Activated CD4-positive, alpha-beta memory T cell treated with anti-CD3 and anti-CD28 coated beads for 36 hours (primary cell): ENCODE measurements at regions of chr20 and their contacts with region 1.

Region 1: DNA sequence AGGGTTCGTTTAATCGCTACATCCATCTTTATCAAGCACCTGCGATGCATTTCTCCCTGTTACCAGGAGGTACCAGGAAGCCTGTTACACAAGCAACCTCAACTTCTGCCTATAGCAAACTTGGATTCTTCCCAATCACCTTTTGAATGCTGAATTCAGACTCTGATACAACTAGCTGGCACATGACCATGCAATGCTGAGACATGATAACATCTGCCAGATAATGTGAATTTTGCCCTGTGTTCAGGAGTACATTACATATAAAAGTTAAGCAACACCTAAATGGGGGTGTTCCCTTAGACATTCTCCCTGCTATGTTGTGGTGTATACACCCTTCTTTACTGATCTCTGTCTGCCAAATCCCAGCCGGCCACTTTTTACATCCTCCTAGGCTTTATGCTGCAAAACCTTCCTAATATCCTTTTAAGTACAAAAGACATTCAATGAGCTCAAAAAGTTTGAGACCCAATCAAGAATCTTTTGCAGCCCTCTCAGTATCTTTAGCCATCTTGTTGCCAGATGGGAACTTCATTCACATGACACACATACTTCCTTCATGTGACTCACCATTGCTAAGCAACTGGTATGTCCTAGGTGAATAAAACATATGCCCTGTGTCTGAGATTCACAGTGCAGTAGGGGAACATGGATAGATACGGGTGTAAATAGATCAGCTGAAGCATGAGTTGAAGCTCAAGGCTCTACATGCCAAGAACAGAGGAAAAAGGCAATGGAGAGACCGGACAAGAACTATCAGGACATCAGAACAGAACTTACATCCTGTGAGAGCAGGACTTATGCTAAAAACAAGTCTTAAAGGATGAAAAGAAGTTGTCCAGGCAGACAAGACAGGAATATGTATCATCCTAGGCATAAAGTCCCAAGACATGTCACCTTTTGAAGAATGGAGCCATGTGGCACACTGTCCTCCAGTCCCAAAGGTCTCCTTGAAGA is 84.3 kb downstream of the ZHX3 start:
- DNase-seq: no peak
- H3K4me3 Mint-ChIP-seq: no peak overlapping the region
- H3K27ac Mint-ChIP-seq: no peak overlapping the region
- H3K4me1 Mint-ChIP-seq: peaks cover 20% of the 10 kb centered on the region
- H3K27me3 Mint-ChIP-seq: no peaks in the 10 kb centered on the region

Region 2: GRCh38 chr20:40902661-40903060 is 330.6 kb before region 1 on chr20:
- CTCF ChIA-PET with region 1: no interaction called
- POLR2A ChIA-PET with region 1: no interaction called
- intact Hi-C with region 1: no loop called
- DNase-seq: no peak
- H3K4me3 Mint-ChIP-seq: no peak overlapping the region
- H3K27ac Mint-ChIP-seq: no peak overlapping the region
- H3K4me1 Mint-ChIP-seq: no peaks in the 10 kb centered on the region
- H3K27me3 Mint-ChIP-seq: peaks cover 3% of the 10 kb centered on the region

Region 3: DNA sequence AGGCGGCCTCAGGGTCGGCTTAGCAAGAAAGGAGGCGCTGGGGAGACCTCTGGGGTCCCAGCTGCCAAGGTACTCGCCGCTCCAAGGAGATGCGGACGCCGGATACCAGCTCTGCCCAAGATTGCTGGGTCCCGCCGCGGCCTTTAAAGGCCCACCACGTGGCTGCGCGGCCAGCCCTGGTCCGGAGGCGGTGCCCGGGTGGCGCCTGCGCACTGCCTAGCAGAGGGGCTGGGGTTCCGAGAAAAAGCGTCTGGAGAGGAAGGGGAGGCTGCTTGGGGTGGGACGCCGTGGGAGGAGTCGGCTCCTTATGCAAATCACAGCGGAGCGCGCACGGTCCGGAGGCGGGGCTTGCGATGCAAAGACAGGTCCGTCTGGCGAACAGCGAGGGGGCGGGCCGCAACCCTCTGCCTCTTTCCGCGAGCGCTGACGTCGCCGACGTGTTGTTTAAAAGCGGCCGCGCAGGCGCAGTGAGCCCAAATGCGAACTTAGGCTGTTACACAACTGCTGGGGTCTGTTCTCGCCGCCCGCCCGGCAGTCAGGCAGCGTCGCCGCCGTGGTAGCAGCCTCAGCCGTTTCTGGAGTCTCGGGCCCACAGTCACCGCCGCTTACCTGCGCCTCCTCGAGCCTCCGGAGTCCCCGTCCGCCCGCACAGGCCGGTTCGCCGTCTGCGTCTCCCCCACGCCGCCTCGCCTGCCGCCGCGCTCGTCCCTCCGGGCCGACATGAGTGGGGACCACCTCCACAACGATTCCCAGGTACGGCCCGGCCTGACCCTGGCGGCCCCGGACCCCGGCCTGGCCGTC is 204.7 kb before region 1 on chr20 and contains the start of gene TOP1:
- CTCF ChIA-PET with region 1: no interaction called
- POLR2A ChIA-PET with region 1: no interaction called
- intact Hi-C with region 1: no loop called
- DNase-seq: peak; percentile 100
- H3K4me3 Mint-ChIP-seq: peak within 1 kb of the TSS; percentile 85
- H3K27ac Mint-ChIP-seq: peak within 1 kb of the TSS; percentile 89
- H3K4me1 Mint-ChIP-seq: peaks cover 47% of the 10 kb centered on the region
- H3K27me3 Mint-ChIP-seq: no peaks in the 10 kb centered on the region
- total RNA-seq, gene TOP1: 128 TPM

Region 4: DNA sequence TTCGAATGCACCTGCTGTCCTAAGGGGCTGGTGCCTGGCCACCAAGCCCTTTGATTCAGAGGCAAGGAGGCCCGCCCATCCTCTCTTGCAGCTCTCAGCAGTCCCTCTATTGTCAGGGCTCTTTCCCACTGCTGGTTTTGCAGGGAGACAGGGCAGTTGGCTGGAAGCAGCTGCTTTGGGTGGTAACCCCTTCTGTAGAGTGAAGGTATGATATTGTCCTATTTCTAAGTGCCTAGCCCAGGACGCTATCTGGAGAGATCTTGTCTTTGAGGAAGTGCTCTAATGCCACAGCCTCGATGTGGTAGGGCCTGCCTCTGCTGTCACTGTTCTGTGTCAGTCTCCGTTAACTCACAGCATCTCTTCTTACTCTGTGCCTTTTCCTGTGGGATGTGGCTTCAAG is 90.3 kb before region 1 on chr20:
- CTCF ChIA-PET with region 1: interaction called, 11 read pairs
- POLR2A ChIA-PET with region 1: no interaction called
- intact Hi-C with region 1: loop called (anchors 2 kb)
- DNase-seq: peak; percentile 60
- H3K4me3 Mint-ChIP-seq: peak overlapping the region; percentile 94
- H3K27ac Mint-ChIP-seq: peak overlapping the region; percentile 92
- H3K4me1 Mint-ChIP-seq: peaks cover 88% of the 10 kb centered on the region
- H3K27me3 Mint-ChIP-seq: no peaks in the 10 kb centered on the region

Region 5: DNA sequence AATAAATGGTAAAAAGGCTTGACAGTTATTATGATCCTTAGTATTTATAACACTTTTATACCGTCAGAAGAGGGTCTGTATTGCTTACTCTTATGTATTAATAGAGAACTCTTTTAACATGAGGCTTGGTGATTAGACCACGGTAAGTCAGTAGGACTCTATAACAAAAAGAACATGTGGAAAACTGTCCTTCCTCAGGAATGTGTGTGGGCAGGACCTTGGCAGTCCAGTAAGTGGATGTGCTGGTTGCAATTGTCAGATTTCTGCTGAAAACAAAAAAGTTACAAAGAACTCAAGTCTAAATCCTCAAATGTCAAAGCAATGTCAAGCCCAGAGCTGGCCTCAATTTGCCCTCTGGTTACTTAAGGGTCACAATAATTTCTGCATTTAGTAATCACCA is 14.8 kb before region 1 on chr20:
- CTCF ChIA-PET with region 1: interaction called, 12 read pairs
- POLR2A ChIA-PET with region 1: no interaction called
- intact Hi-C with region 1: no loop called
- DNase-seq: no peak
- H3K4me3 Mint-ChIP-seq: no peak overlapping the region
- H3K27ac Mint-ChIP-seq: no peak overlapping the region
- H3K4me1 Mint-ChIP-seq: no peaks in the 10 kb centered on the region
- H3K27me3 Mint-ChIP-seq: no peaks in the 10 kb centered on the region

Region 6: GRCh38 chr20:41317536-41318270 is 84.5 kb after region 1 on chr20 and contains the start of gene ZHX3:
- CTCF ChIA-PET with region 1: no interaction called
- POLR2A ChIA-PET with region 1: no interaction called
- intact Hi-C with region 1: loop called (anchors 5 kb)
- DNase-seq: peak; percentile 97
- H3K4me3 Mint-ChIP-seq: peak within 1 kb of the TSS; percentile 67
- H3K27ac Mint-ChIP-seq: peak within 1 kb of the TSS; percentile 14
- H3K4me1 Mint-ChIP-seq: peaks cover 20% of the 10 kb centered on the region
- H3K27me3 Mint-ChIP-seq: no peaks in the 10 kb centered on the region
- total RNA-seq, gene ZHX3: 9.4 to 11.3 TPM

Region 7: DNA sequence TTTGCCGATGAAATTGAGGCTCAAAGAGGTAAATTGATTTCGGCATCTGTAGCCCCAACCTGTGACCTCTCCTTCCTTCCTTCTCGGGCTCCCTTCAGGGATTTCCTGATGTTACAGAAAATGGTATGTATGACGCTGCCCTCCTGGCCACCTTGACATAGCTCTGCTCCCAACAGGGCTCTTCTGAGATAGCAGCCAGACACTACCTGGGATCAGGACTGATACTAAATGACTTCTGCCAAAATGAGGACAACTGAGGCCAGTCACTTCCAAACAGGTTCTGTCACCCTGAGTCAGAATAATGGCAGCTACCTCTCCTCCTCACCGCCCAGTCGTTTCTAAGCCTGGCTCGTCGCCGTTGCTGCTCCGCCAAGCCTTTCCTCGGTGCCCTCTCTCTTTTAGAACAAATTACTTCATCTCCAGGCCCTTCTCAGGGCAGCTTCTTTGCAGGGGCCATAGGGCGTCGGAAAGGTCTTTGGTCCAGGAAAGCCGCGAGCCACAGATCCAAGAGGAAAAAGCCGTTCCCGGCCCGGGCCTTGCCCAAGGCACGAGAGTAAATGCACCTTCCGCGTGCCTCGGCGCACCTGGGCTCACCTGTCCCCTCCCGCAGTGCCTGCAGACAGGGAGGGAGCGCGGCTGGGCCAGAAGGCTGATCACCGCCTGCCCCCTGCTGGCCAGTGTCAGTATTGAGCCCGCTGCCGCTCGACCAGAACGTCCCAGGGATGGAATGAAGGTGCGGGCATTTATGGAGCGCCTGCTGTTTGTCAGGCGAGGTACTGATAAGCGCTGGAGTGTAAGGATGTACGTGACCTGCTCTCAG is 106.5 kb after region 1 on chr20:
- CTCF ChIA-PET with region 1: interaction called, 14 read pairs
- POLR2A ChIA-PET with region 1: no interaction called
- intact Hi-C with region 1: loop called (anchors 1 kb)
- DNase-seq: peak; percentile 90
- H3K4me3 Mint-ChIP-seq: peak overlapping the region; percentile 63
- H3K27ac Mint-ChIP-seq: no peak overlapping the region
- H3K4me1 Mint-ChIP-seq: peaks cover 5% of the 10 kb centered on the region
- H3K27me3 Mint-ChIP-seq: peaks cover 7% of the 10 kb centered on the region